Caco-2 (cell line): ENCODE measurements at regions of chr1 and their contacts with region 1.

Region 1: DNA sequence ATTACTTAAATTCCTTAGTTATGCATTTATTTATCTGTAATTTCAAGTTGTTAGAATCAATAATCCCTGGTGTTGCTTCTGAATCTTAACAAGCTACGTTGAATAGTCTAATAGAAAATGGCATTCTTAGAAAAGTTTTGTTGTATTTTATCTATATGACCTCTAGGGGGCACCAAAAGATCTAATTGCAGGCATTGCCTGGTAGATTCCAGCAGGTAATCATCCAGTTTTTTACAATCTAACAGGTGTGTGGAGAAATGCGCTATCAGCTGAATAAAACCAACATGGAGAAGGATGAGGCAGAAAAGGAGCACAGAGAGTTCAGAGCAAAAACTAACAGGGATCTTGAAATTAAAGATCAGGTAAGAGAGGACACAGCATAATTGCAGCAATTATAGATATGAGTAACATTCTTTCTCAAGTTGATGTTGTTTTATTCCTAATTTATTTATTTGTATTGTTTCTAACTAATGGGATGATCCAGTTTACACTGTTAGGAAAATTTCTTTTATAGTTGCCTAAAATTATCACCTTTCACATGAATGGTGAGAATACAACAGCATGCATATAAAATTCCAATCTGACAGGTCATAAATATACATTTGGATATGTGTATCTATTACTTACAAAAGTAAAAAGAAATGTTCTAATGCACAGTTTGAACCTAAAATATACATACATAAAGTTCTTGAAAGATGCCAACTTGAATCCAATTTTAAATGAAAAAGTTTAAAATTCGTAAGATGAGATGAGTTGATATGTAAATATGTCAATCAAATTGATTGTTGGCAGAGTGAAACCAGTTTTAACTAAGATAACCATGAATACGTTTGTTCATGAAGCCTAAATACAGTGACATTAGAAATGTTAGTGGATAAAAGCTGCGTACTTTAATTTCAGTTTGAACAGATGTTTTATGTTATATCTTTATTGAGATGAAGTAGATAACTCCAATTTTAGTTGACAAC is 88.4 kb downstream of the SDCCAG8 start:
- DNase-seq: peak in 1 of 2 experiments; percentile 45
- H3K4me3 ChIP-seq: no peak overlapping the region
- H3K4me3 Mint-ChIP-seq: no peak overlapping the region
- H3K27ac Mint-ChIP-seq: no peak overlapping the region
- H3K4me1 ChIP-seq: no peaks in the 10 kb centered on the region
- H3K4me1 Mint-ChIP-seq: peaks cover 12% of the 10 kb centered on the region
- H3K27me3 ChIP-seq: no peaks in the 10 kb centered on the region
- H3K27me3 Mint-ChIP-seq: no peaks in the 10 kb centered on the region
- CTCF ChIP-seq: peak; percentile 68 to 71

Region 2: DNA sequence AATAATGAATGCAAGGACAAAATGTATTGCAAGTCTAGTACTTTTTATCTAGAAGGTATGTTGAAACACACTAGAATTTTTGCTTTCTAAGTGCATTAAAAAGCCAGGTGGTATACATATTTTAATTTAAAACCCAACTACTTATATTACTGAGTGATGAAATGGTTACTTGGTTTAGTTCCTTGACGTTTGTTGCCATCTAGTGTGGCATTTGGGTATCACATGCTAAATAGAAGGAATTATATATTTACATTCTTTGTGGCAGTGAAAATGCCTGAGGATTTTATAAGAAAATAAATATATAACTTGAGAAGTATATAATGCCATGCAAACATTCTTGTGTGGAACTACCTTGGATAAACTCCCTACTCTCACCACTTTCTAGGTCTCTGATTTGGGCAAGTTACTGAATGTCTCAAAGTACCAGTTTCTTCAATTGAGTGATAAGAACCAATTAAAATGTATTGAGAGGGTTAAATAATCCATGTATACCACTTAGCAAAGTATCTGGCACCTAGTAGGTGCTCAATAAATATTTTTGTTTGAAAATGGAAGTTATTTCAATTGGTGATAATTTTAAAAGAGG is 18.9 kb before region 1 on chr1:
- CTCF ChIA-PET with region 1: no interaction called
- POLR2A ChIA-PET with region 1: no interaction called
- intact Hi-C with region 1: no loop called
- DNase-seq: peak in 1 of 2 experiments; percentile 56
- H3K4me3 ChIP-seq: no peak overlapping the region
- H3K4me3 Mint-ChIP-seq: no peak overlapping the region
- H3K27ac Mint-ChIP-seq: no peak overlapping the region
- H3K4me1 ChIP-seq: no peaks in the 10 kb centered on the region
- H3K4me1 Mint-ChIP-seq: no peaks in the 10 kb centered on the region
- H3K27me3 ChIP-seq: no peaks in the 10 kb centered on the region
- H3K27me3 Mint-ChIP-seq: no peaks in the 10 kb centered on the region
- CTCF ChIP-seq: peak; percentile 57 to 67

Region 3: GRCh38 chr1:243409284-243409683 is 65.0 kb after region 1 on chr1:
- CTCF ChIA-PET with region 1: interaction called, 18 read pairs
- POLR2A ChIA-PET with region 1: no interaction called
- intact Hi-C with region 1: loop called (anchors 1 kb)
- DNase-seq: peak in 1 of 2 experiments; percentile 13
- H3K4me3 ChIP-seq: no peak overlapping the region
- H3K4me3 Mint-ChIP-seq: no peak overlapping the region
- H3K27ac Mint-ChIP-seq: no peak overlapping the region
- H3K4me1 ChIP-seq: no peaks in the 10 kb centered on the region
- H3K4me1 Mint-ChIP-seq: no peaks in the 10 kb centered on the region
- H3K27me3 ChIP-seq: no peaks in the 10 kb centered on the region
- H3K27me3 Mint-ChIP-seq: no peaks in the 10 kb centered on the region
- CTCF ChIP-seq: peak; percentile 12 to 42

Region 4: GRCh38 chr1:243708210-243708609 is 364.0 kb after region 1 on chr1:
- CTCF ChIA-PET with region 1: no interaction called
- POLR2A ChIA-PET with region 1: no interaction called
- intact Hi-C with region 1: loop called (anchors 2 kb)
- DNase-seq: no peak
- H3K4me3 ChIP-seq: no peak overlapping the region
- H3K4me3 Mint-ChIP-seq: no peak overlapping the region
- H3K27ac Mint-ChIP-seq: no peak overlapping the region
- H3K4me1 ChIP-seq: no peaks in the 10 kb centered on the region
- H3K4me1 Mint-ChIP-seq: no peaks in the 10 kb centered on the region
- H3K27me3 ChIP-seq: no peaks in the 10 kb centered on the region
- H3K27me3 Mint-ChIP-seq: peaks cover 3% of the 10 kb centered on the region
- CTCF ChIP-seq: peak in 1 of 2 experiments; percentile 37